Right ventricle myocardium inferior (tissue), 1 donor: ENCODE measurements at regions of chr10 and their contacts with region 1.

Region 1: GRCh38 chr10:103416436-103417147 is 20.2 kb downstream of the PDCD11 start:
- DNase-seq: no peak
- ATAC-seq: peak; percentile 58

Region 2: DNA sequence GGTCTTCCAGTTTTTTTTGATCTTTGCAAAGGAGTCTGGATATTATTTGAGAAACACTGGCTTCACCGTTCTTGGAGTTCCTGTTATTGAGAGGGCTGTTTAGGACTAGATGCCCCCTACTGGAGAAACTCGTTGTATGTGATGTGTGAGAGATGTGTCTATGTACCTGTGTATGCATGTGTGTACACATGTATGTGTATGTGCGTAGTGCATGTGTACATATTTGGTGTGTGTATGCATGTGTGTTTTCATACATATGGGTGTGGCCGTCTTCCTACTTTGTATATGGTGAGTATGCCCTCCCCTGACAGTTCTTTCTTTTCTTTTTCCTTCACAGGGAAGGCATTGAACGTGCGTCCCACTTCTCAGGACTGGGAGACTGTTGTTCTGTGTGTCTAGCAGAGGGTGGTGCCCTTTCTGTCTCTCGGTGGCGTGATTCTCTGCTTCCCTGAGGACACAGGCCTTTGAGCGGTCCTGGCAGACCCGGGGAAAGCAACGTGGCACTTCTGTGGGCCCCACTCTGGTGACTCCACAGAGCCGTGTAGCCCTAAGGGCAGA is 65.5 kb after region 1 on chr10:
- intact Hi-C with region 1: loop called (anchors 1 kb)
- DNase-seq: no peak
- ATAC-seq: peak; percentile 59

Region 3: GRCh38 chr10:103592186-103593021 is 175.8 kb after region 1 on chr10:
- intact Hi-C with region 1: loop called (anchors 5 kb)
- DNase-seq: no peak
- ATAC-seq: peak; percentile 34

Region 4: GRCh38 chr10:103712570-103713498 is 296.2 kb after region 1 on chr10:
- intact Hi-C with region 1: no loop called
- DNase-seq: peak; percentile 81
- ATAC-seq: peak; percentile 86